CD8-positive, alpha-beta memory T cell (primary cell): ENCODE measurements at regions of chr18 and their contacts with region 1.

Region 1: DNA sequence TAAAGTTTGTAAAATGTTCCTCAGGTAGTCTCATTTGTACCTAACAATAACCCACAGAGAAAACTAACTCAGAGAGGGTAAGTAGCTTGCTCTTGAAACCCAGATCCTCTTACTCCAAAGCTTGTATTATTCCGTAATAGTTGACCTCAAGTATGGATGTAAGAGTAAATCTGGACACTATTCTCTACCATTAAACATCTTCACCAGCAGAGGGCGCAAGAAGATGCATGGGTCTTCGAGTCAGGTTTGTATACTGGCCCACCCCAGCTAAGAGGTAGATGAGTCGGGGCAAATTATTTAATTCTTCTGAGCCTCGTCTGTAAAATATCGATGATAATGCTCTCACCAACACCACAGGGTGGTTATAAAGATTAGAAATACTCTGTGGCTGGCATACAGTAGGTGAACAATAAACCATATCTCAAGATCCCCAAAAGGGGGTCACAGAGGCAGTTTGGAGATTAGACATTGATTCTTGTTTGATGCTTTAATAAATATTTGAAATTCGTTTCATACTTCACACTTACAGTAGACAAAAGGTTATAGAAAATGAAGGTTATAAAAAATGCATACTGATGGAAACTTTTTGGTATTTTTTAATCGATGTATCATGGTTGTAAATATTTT is 3.5 kb upstream of the CABLES1 start:
- DNase-seq: peak; percentile 42 to 72 (median 53)
- H3K4me3 ChIP-seq: no peak overlapping the region
- H3K4me3 Mint-ChIP-seq: peak overlapping the region in 2 of 7 donors; percentile 7 to 54
- H3K27ac ChIP-seq: no peak overlapping the region
- H3K27ac Mint-ChIP-seq: no peak overlapping the region
- H3K4me1 ChIP-seq: peaks cover 8% of the 10 kb centered on the region
- H3K4me1 Mint-ChIP-seq: peaks cover 7 to 20% (median 8%) of the 10 kb centered on the region in 3 donors
- H3K27me3 ChIP-seq: peaks cover 22% of the 10 kb centered on the region
- H3K27me3 Mint-ChIP-seq: peaks cover 9 to 37% of the 10 kb centered on the region in 2 donors

Region 2: GRCh38 chr18:22939649-22940048 is 192.2 kb before region 1 on chr18:
- CTCF ChIA-PET with region 1: no interaction called
- POLR2A ChIA-PET with region 1: no interaction called
- DNase-seq: no peak
- H3K4me3 ChIP-seq: no peak overlapping the region
- H3K4me3 Mint-ChIP-seq: no peak overlapping the region
- H3K27ac ChIP-seq: no peak overlapping the region
- H3K27ac Mint-ChIP-seq: no peak overlapping the region
- H3K4me1 ChIP-seq: no peaks in the 10 kb centered on the region
- H3K4me1 Mint-ChIP-seq: peaks cover under 1 to 8% (median 4%) of the 10 kb centered on the region in 3 donors
- H3K27me3 ChIP-seq: no peaks in the 10 kb centered on the region
- H3K27me3 Mint-ChIP-seq: no peaks in the 10 kb centered on the region

Region 3: DNA sequence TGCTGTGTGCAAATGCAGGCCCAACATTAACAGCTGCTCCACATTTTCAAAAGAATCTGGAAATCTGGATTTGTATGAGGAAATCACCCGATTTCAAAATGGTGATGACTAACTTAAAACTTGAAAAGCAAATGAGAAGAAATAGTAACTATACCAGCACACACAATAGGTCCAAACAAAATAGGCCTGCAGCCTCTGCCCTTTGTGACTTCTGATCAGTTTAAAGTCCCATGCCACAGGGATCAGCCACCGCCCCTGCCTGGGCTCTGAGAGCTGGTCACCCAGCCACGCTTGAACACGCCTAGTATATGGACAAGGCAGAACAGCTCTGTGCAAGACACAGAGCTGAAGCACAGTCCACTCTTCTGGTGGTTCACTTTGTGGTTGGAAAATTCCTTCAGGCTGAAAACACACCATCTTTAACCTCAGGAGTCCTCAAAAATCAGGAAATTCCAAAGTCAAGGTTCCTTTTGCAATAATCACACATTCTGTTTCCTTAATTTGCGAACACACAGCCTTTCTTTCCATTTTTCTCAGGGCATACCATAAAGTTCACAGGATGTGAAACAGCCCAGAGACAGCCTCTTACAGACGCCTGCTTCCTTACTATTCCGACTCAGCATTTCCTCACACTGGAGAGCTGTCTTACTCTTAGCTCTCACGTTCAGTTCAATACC is 171.2 kb after region 1 on chr18:
- CTCF ChIA-PET with region 1: no interaction called
- POLR2A ChIA-PET with region 1: no interaction called
- DNase-seq: no peak
- H3K4me3 ChIP-seq: no peak overlapping the region
- H3K4me3 Mint-ChIP-seq: no peak overlapping the region
- H3K27ac ChIP-seq: no peak overlapping the region
- H3K27ac Mint-ChIP-seq: peak overlapping the region in 1 of 8 donors; percentile 79
- H3K4me1 ChIP-seq: peaks cover 10% of the 10 kb centered on the region
- H3K4me1 Mint-ChIP-seq: peaks cover 15 to 20% (median 17%) of the 10 kb centered on the region in 3 donors
- H3K27me3 ChIP-seq: no peaks in the 10 kb centered on the region
- H3K27me3 Mint-ChIP-seq: no peaks in the 10 kb centered on the region

Region 4: GRCh38 chr18:23356915-23357601 is 225.3 kb after region 1 on chr18:
- CTCF ChIA-PET with region 1: interaction called, 52 read pairs
- POLR2A ChIA-PET with region 1: no interaction called
- DNase-seq: no peak
- H3K4me3 ChIP-seq: no peak overlapping the region
- H3K4me3 Mint-ChIP-seq: peak overlapping the region in 1 of 7 donors; percentile 19
- H3K27ac ChIP-seq: no peak overlapping the region
- H3K27ac Mint-ChIP-seq: peak overlapping the region in 3 of 8 donors; percentile 7 to 85 (median 12)
- H3K4me1 ChIP-seq: peaks cover 14% of the 10 kb centered on the region
- H3K4me1 Mint-ChIP-seq: peaks cover 10 to 21% (median 20%) of the 10 kb centered on the region in 3 donors
- H3K27me3 ChIP-seq: no peaks in the 10 kb centered on the region
- H3K27me3 Mint-ChIP-seq: peaks cover 0 to 2% of the 10 kb centered on the region in 2 donors

Region 5: GRCh38 chr18:23412351-23412964 is 280.7 kb after region 1 on chr18:
- CTCF ChIA-PET with region 1: interaction called, 41 read pairs
- POLR2A ChIA-PET with region 1: interaction called, 3 read pairs
- DNase-seq: no peak
- H3K4me3 ChIP-seq: no peak overlapping the region
- H3K4me3 Mint-ChIP-seq: no peak overlapping the region
- H3K27ac ChIP-seq: no peak overlapping the region
- H3K27ac Mint-ChIP-seq: peak overlapping the region in 1 of 8 donors; percentile 66
- H3K4me1 ChIP-seq: no peaks in the 10 kb centered on the region
- H3K4me1 Mint-ChIP-seq: peaks cover 0 to 5% (median 2%) of the 10 kb centered on the region in 3 donors
- H3K27me3 ChIP-seq: no peaks in the 10 kb centered on the region
- H3K27me3 Mint-ChIP-seq: no peaks in the 10 kb centered on the region